GM10248 (cell line): ENCODE measurements at regions of chr14 and their contacts with region 1.

Region 1: GRCh38 chr14:61837336-61838229 is 75.4 kb downstream of the SNAPC1 start:
- DNase-seq: peak; percentile 66
- CTCF ChIP-seq: peak; percentile 90

Region 2: DNA sequence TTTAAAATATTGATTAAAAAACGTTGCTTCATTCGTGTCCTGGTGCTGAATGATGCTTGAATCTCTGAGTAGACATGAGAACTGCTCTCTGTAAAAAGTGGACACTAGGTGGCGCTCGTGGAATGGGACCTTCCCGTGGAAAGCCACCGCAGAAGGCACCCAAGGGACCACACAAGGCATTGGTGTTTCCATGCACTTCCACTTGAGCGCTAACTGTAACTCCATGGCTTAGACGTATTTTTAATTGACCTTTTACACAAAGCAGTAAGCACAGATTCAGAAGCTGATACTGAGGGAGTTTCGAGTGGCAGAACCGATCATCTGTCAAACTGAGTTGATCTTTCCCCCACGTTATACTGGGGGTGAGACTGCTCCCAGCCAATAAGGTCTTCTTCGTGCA is 380.9 kb before region 1 on chr14:
- CTCF ChIA-PET with region 1: interaction called, 77 read pairs
- POLR2A ChIA-PET with region 1: no interaction called
- DNase-seq: peak; percentile 75
- CTCF ChIP-seq: peak; percentile 77

Region 3: DNA sequence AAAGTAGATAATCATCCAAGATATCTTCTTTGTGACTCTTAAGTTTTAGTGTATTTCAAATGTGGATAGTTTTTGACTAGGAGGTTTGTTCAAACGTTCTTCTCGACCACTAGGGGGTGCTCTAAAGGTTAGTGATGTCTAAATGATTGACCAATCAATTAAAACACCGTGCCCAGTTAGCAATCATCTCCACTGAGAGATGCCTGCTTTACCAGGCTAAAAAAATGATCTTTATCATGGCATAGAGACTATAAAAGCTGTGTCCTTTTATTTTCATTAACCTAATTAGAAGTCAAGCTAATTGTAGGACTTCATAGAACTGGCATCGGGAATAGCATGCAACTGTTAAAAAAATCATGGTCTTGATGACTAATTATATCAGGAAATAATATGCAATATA is 362.3 kb before region 1 on chr14:
- CTCF ChIA-PET with region 1: interaction called, 42 read pairs
- POLR2A ChIA-PET with region 1: no interaction called
- DNase-seq: peak; percentile 52
- CTCF ChIP-seq: peak; percentile 39

Region 4: DNA sequence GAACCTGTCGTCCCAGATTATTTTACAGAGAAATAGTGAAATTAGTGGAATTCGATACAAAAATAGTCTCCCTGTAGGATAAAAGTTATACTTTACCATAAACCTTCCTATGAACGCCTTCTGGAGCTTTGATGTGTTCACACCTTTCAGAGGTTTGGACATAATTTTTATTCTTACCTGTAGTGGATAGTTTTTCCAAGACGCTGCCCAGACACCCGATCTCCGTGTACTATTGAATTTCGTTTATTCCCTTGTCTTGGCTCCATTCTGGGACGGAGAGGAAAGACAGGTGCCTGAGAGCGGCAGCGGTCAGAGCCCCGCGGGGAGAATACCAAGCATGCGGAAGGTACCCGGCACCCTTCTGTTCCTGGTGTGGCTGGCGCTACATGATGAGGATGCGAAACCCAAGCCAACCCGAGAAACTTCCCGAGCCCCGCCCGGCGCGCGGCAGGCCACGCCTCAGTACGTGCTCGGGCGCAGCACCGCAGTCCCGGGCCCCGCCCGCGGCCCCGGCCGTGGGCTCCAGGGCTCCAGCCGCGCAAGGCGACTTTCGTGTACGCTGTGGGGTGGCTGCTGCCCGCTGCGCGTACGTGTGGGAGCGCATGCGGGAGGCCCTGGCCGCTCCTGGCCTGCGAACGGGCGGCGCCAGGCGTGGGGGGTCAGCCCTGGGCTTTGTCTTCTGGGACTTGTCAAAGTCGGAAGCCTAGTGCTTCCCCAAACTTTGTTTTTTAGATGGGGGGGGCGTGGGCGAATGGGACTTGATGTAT is 86.7 kb before region 1 on chr14:
- CTCF ChIA-PET with region 1: interaction called, 11 read pairs
- POLR2A ChIA-PET with region 1: no interaction called
- DNase-seq: peak; percentile 89
- CTCF ChIP-seq: no peak

Region 5: DNA sequence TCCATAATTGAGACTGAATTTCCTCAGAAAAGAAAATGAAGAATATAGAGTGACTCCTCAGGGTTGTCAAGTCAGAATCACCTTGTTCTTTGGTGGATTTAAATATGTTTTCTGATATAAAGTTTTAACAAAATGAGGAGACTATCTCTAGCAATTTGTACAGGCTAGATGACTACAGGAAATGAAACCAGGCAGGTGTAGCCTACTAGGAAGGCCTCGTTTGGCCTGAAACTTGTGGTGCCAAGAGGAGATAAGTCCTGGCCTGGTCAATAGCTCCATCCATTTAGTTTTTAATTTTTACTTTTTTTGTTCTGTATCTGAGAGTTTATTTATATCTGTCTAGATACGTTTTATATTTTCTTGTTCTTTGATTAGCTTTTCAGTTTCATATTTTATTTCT is 33.8 kb before region 1 on chr14:
- CTCF ChIA-PET with region 1: interaction called, 13 read pairs
- POLR2A ChIA-PET with region 1: no interaction called
- DNase-seq: no peak
- CTCF ChIP-seq: no peak

Region 6: DNA sequence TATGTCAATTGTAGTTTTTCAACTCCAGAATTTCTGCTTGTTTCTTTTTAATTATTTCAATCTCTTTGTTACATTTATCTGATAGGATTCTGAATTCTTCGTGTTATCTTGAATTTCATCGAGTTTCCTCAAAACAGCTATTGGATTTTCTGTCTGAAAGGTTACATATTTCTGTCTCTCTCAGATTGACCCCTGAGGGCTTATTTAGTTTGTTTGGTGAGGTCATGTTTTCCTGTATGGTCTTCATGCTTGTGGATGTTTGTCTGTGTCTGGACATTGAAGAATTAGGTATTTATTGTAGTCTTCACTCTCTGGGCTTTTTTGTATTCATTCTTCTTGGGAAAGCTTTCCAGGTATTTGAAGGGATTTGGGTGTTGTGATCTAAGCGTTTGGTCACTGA is 10.3 kb after region 1 on chr14:
- CTCF ChIA-PET with region 1: interaction called, 27 read pairs
- POLR2A ChIA-PET with region 1: no interaction called
- DNase-seq: no peak
- CTCF ChIP-seq: no peak

Region 7: GRCh38 chr14:62002642-62003041 is 165.1 kb after region 1 on chr14:
- CTCF ChIA-PET with region 1: no interaction called
- POLR2A ChIA-PET with region 1: no interaction called
- DNase-seq: no peak
- CTCF ChIP-seq: no peak

Region 8: GRCh38 chr14:62126879-62127478 is 289.4 kb after region 1 on chr14:
- CTCF ChIA-PET with region 1: interaction called, 26 read pairs
- POLR2A ChIA-PET with region 1: no interaction called
- DNase-seq: peak; percentile 28
- CTCF ChIP-seq: peak; percentile 79